ENCODE measurements at regions of chr10 and their contacts with region 1.

Region 1: GRCh38 chr10:23314835-23315239 is 29.8 kb downstream of the C10orf67 start:
- DNase-seq: peak; percentile 65
- H3K4me3 Mint-ChIP-seq: no peak overlapping the region
- H3K27ac Mint-ChIP-seq: no peak overlapping the region
- H3K4me1 Mint-ChIP-seq: no peaks in the 10 kb centered on the region
- H3K27me3 Mint-ChIP-seq: peaks cover 10% of the 10 kb centered on the region

Region 2: GRCh38 chr10:23325132-23325531 is 10.3 kb after region 1 on chr10:
- CTCF ChIA-PET with region 1: interaction called, 13 read pairs
- DNase-seq: peak; percentile 38
- H3K4me3 Mint-ChIP-seq: no peak overlapping the region
- H3K27ac Mint-ChIP-seq: no peak overlapping the region
- H3K4me1 Mint-ChIP-seq: peaks cover 2% of the 10 kb centered on the region
- H3K27me3 Mint-ChIP-seq: peaks cover 8% of the 10 kb centered on the region

Region 3: GRCh38 chr10:23702977-23703414 is 388.2 kb after region 1 on chr10:
- CTCF ChIA-PET with region 1: interaction called, 24 read pairs
- DNase-seq: peak; percentile 64
- H3K4me3 Mint-ChIP-seq: no peak overlapping the region
- H3K27ac Mint-ChIP-seq: peak overlapping the region; percentile 21
- H3K4me1 Mint-ChIP-seq: no peaks in the 10 kb centered on the region
- H3K27me3 Mint-ChIP-seq: peaks cover 16% of the 10 kb centered on the region